Lower leg skin (tissue), 4 donors: ENCODE measurements at regions of chr9 and their contacts with region 1.

Region 1: DNA sequence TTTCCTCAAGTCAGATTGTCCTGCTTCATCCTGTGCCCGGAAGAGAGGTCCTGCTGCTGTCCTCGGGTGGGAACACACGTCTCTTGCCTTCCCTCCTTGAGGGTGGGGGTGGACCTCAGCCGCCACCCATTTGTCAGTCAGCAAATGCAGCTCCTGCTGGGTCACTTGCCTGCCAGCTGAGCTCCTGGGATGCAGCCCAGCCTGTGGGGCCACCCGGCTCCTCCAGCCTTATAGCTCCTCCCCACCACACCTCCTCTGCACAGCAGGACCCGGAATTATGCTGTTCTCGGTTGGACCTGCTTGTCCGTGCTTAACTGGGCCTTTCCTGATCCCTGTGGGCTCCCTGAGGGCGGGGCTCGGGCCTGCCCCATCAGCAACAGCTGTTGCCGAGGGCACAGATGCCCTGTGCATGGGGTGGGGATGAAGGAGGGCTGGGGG is 52.7 kb downstream of the RXRA start:
- DNase-seq: no peak
- H3K4me3 ChIP-seq: no peak overlapping the region
- CTCF ChIP-seq: no peak
- POLR2A ChIP-seq: no peak

Region 2: DNA sequence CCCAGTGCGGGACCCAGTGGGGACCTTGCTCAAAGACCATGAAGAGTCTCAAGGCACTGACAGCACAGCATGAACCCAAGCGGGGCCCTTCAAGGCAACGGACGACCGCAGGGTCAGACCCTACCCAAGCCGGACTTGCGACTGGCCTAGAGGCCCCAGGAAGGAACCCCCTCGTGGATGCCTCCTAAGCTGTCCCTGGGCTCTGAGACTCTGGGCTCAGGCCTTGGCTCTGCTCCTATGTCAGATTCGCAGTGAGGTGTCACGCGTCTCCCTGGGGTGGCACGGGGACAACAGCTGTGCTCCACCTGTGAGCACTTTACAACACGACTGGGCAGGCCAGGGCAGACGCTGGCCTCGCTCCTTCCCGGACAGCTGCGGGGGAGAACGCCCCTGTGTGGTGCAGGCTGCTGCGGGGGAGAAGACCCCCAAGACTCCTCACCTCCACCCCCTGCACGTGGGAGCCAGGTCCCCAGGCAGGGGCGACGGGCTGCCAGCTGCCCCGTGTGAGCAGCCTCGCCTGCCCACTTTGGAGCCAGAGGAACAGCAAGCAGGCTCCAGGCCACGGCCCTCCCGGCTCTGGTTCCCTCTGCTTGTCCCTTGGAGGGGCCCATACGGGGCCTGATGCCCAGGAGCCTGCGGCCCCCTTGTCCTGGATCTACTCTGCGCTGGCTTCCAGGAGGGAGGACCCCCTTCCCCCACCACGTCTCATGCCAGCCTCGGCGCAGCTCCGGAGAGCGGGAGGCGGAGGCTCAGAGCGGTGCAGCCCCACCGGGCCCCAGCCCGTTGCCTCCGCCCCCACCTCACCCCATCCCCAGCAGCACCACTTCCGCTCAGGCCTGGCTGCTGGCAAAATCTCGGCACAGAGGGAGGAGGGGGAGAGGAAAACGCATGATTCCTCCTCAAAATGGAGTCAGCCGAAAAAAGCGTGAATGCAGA is 676.8 kb before region 1 on chr9:
- intact Hi-C with region 1: no loop called
- DNase-seq: no peak
- H3K4me3 ChIP-seq: no peak overlapping the region
- CTCF ChIP-seq: no peak
- POLR2A ChIP-seq: no peak

Region 3: GRCh38 chr9:134413890-134414731 is 35.2 kb after region 1 on chr9:
- intact Hi-C with region 1: loop called (anchors 5 kb)
- DNase-seq: no peak
- H3K4me3 ChIP-seq: no peak overlapping the region
- CTCF ChIP-seq: no peak
- POLR2A ChIP-seq: no peak

Region 4: GRCh38 chr9:134455934-134456739 is 77.2 kb after region 1 on chr9:
- intact Hi-C with region 1: no loop called
- DNase-seq: peak; percentile 82 to 96
- H3K4me3 ChIP-seq: no peak overlapping the region
- CTCF ChIP-seq: no peak
- POLR2A ChIP-seq: peak in 1 of 2 donors; percentile 10